ENCODE measurements at regions of chr3 and their contacts with region 1.

Region 1: GRCh38 chr3:24589931-24590880 is 95.6 kb upstream of the THRB start:
- DNase-seq: peak; percentile 25
- H3K4me3 ChIP-seq: no peak overlapping the region
- H3K27ac ChIP-seq: no peak overlapping the region
- H3K4me1 ChIP-seq: peaks cover 37% of the 10 kb centered on the region
- H3K27me3 ChIP-seq: no peaks in the 10 kb centered on the region
- CTCF ChIP-seq: no peak
- POLR2A ChIP-seq: no peak

Region 2: GRCh38 chr3:23519314-23520208 is 1070.6 kb before region 1 on chr3:
- CTCF ChIA-PET with region 1: no interaction called
- POLR2A ChIA-PET with region 1: no interaction called
- dilution Hi-C with region 1: no loop called
- intact Hi-C with region 1: loop called (anchors 5 kb)
- DNase-seq: no peak
- H3K4me3 ChIP-seq: no peak overlapping the region
- H3K27ac ChIP-seq: no peak overlapping the region
- H3K4me1 ChIP-seq: peaks cover 14% of the 10 kb centered on the region
- H3K27me3 ChIP-seq: no peaks in the 10 kb centered on the region
- CTCF ChIP-seq: no peak
- POLR2A ChIP-seq: no peak

Measured in endothelial cell of umbilical vein (primary cell).